ENCODE measurements at regions of chr18 and their contacts with region 1.

Region 1: GRCh38 chr18:9971313-9971920 is 57.6 kb downstream of the VAPA start:
- DNase-seq: peak; percentile 53 to 85
- ATAC-seq: peak; percentile 80 to 93 (median 87)
- H3K4me3 ChIP-seq: no peak overlapping the region
- H3K4me3 Mint-ChIP-seq: no peak overlapping the region
- H3K27ac ChIP-seq: no peak overlapping the region
- H3K27ac Mint-ChIP-seq: no peak overlapping the region
- H3K4me1 ChIP-seq: peaks cover 11% of the 10 kb centered on the region
- H3K4me1 Mint-ChIP-seq: peaks cover 32 to 34% of the 10 kb centered on the region in 2 donors
- H3K27me3 ChIP-seq: no peaks in the 10 kb centered on the region
- H3K27me3 Mint-ChIP-seq: peaks cover 31 to 42% of the 10 kb centered on the region in 2 donors
- CTCF ChIP-seq: peak; percentile 86

Region 2: DNA sequence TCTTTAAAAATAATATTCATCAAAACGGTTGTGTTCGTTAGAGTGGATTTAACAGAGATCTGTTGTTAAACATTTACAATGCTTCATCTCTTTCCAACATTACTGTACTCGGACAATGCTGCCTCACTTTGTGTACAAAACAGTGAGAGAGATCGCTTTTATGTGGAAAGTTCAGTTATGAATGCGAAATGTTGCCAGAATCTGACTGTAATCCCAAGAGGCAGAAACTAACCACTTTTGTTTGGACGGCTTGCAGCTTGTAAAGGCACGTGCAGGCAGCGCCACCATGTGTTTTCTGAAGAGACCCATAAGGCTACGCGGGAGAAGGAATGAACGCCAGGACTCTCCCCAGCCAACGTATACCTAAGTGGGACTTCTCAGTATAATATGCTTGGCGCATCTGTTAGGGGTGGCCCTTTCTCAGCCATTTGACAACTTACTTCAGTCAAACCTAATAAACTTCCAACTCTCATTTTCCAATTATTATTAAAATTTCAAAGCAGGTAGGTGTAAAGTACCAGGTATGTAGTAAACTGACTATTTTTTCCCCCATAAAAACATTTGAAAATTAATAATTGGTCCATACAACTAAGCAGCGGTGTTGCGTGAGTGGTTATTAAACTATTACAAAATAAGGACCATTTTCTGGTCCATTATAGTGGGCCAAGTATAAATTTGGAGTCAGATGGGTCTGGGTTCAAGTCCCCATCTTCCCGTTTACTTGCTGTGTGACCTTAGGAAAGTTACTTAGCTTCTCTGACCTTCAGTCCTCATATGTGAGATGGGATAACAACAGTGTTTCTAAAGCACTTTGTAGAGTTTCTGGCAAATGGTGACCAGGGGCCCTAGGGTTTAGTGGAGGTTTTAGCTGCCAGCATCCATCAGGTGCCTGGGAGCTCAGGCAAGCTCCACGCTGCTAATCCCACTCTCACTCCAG is 548.9 kb after region 1 on chr18:
- intact Hi-C with region 1: loop called (anchors 1 kb)
- DNase-seq: peak in 1 of 2 donors; percentile 78
- ATAC-seq: peak; percentile 65 to 68 (median 68)
- H3K4me3 ChIP-seq: no peak overlapping the region
- H3K4me3 Mint-ChIP-seq: no peak overlapping the region
- H3K27ac ChIP-seq: no peak overlapping the region
- H3K27ac Mint-ChIP-seq: no peak overlapping the region
- H3K4me1 ChIP-seq: peaks cover 10% of the 10 kb centered on the region
- H3K4me1 Mint-ChIP-seq: peaks cover 10 to 12% of the 10 kb centered on the region in 2 donors
- H3K27me3 ChIP-seq: peaks cover 6% of the 10 kb centered on the region
- H3K27me3 Mint-ChIP-seq: peaks cover 42 to 55% of the 10 kb centered on the region in 2 donors
- CTCF ChIP-seq: peak; percentile 26

Region 3: GRCh38 chr18:11553098-11553940 is 1581.9 kb after region 1 on chr18:
- intact Hi-C with region 1: loop called (anchors 5 kb)
- DNase-seq: peak in 1 of 2 donors; percentile 67
- ATAC-seq: peak; percentile 50 to 77 (median 61)
- H3K4me3 ChIP-seq: no peak overlapping the region
- H3K4me3 Mint-ChIP-seq: no peak overlapping the region
- H3K27ac ChIP-seq: no peak overlapping the region
- H3K27ac Mint-ChIP-seq: no peak overlapping the region
- H3K4me1 ChIP-seq: no peaks in the 10 kb centered on the region
- H3K4me1 Mint-ChIP-seq: peaks cover 6 to 7% of the 10 kb centered on the region in 2 donors
- H3K27me3 ChIP-seq: no peaks in the 10 kb centered on the region
- H3K27me3 Mint-ChIP-seq: peaks cover 0 to 12% of the 10 kb centered on the region in 2 donors
- CTCF ChIP-seq: peak; percentile 78